Caco-2 (cell line): ENCODE measurements at regions of chr10 and their contacts with region 1.

Region 1: GRCh38 chr10:49518982-49519578 is 19.8 kb downstream of the ERCC6 start:
- DNase-seq: peak in 1 of 2 experiments; percentile 67
- H3K4me3 ChIP-seq: no peak overlapping the region
- H3K4me3 Mint-ChIP-seq: no peak overlapping the region
- H3K27ac Mint-ChIP-seq: no peak overlapping the region
- H3K4me1 ChIP-seq: no peaks in the 10 kb centered on the region
- H3K4me1 Mint-ChIP-seq: no peaks in the 10 kb centered on the region
- H3K27me3 ChIP-seq: no peaks in the 10 kb centered on the region
- H3K27me3 Mint-ChIP-seq: no peaks in the 10 kb centered on the region
- CTCF ChIP-seq: peak; percentile 79 to 81

Region 2: GRCh38 chr10:48885383-48885782 is 633.7 kb before region 1 on chr10:
- CTCF ChIA-PET with region 1: no interaction called
- POLR2A ChIA-PET with region 1: no interaction called
- intact Hi-C with region 1: loop called (anchors 10 kb)
- DNase-seq: peak in 1 of 2 experiments; percentile 61
- H3K4me3 ChIP-seq: no peak overlapping the region
- H3K4me3 Mint-ChIP-seq: no peak overlapping the region
- H3K27ac Mint-ChIP-seq: no peak overlapping the region
- H3K4me1 ChIP-seq: no peaks in the 10 kb centered on the region
- H3K4me1 Mint-ChIP-seq: no peaks in the 10 kb centered on the region
- H3K27me3 ChIP-seq: peaks cover 2% of the 10 kb centered on the region; the same call in 1 of the 2 replicates
- H3K27me3 Mint-ChIP-seq: peaks cover 20% of the 10 kb centered on the region
- CTCF ChIP-seq: peak; percentile 70 to 80

Region 3: DNA sequence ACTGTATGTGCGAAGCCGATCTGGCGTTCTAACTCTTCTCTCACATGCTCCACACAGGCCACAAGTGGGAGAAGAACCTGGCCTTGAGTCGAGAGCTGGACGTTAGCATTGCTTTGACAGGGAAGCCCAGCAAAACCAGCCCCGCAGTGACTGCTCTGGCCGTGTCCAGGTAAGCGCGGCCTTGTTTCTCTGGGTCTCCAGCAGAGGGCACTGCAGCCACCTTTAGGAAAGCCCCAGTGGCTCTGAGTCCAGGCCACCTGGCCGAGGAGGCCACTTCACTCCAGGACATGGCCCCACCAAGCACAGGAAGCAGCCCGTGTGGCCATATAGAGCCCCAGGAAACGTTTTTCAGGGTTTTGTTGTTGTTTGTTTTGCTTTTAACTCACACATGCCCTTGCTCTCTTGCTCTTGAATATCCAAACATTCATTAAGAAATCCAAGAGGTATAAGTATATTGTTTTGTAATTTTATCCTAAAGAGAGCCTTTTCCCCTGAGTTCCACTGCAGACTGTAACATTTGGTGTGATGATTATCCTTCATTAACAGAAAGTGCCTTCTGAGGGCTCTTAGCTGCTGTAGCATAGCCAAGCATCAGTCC is 537.7 kb before region 1 on chr10:
- CTCF ChIA-PET with region 1: no interaction called
- POLR2A ChIA-PET with region 1: no interaction called
- intact Hi-C with region 1: loop called (anchors 10 kb)
- DNase-seq: peak; percentile 75 to 80
- H3K4me3 ChIP-seq: no peak overlapping the region
- H3K4me3 Mint-ChIP-seq: no peak overlapping the region
- H3K27ac Mint-ChIP-seq: no peak overlapping the region
- H3K4me1 ChIP-seq: no peaks in the 10 kb centered on the region
- H3K4me1 Mint-ChIP-seq: no peaks in the 10 kb centered on the region
- H3K27me3 ChIP-seq: no peaks in the 10 kb centered on the region
- H3K27me3 Mint-ChIP-seq: peaks cover 18% of the 10 kb centered on the region
- CTCF ChIP-seq: peak; percentile 87 to 93

Region 4: DNA sequence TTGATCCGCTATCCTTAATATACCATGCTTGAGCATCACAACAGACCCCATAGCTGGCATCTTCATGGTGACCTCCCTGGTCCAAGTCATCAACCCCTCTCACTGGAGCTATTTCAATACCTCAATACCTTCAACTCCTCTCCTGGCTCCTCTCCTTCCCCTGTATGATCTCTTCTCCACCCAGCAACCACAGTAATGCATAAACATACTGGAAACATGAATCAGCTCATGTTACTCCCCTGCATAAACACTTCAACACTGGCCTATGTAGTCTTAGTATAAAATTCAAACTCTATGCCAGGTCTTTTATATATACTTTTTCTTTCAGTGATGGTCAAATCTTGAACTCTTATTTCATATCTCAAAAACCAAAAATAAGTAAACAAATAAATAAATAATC is 299.0 kb before region 1 on chr10:
- CTCF ChIA-PET with region 1: no interaction called
- POLR2A ChIA-PET with region 1: no interaction called
- intact Hi-C with region 1: loop called (anchors 10 kb)
- DNase-seq: no peak
- H3K4me3 ChIP-seq: no peak overlapping the region
- H3K4me3 Mint-ChIP-seq: no peak overlapping the region
- H3K27ac Mint-ChIP-seq: no peak overlapping the region
- H3K4me1 ChIP-seq: no peaks in the 10 kb centered on the region
- H3K4me1 Mint-ChIP-seq: no peaks in the 10 kb centered on the region
- H3K27me3 ChIP-seq: no peaks in the 10 kb centered on the region
- H3K27me3 Mint-ChIP-seq: peaks cover 18% of the 10 kb centered on the region
- CTCF ChIP-seq: no peak

Region 5: GRCh38 chr10:49407552-49408137 is 111.4 kb before region 1 on chr10:
- CTCF ChIA-PET with region 1: interaction called, 133 read pairs
- POLR2A ChIA-PET with region 1: no interaction called
- intact Hi-C with region 1: loop called (anchors 1 kb)
- DNase-seq: peak; percentile 84 to 91
- H3K4me3 ChIP-seq: no peak overlapping the region
- H3K4me3 Mint-ChIP-seq: no peak overlapping the region
- H3K27ac Mint-ChIP-seq: no peak overlapping the region
- H3K4me1 ChIP-seq: peaks cover 3% of the 10 kb centered on the region; the same call in 1 of the 2 replicates
- H3K4me1 Mint-ChIP-seq: peaks cover 6% of the 10 kb centered on the region
- H3K27me3 ChIP-seq: no peaks in the 10 kb centered on the region; the same call in 1 of the 2 replicates
- H3K27me3 Mint-ChIP-seq: peaks cover 14% of the 10 kb centered on the region
- CTCF ChIP-seq: peak; percentile 95 to 98

Region 6: GRCh38 chr10:49419005-49419404 is 100.1 kb before region 1 on chr10:
- CTCF ChIA-PET with region 1: interaction called, 4 read pairs
- POLR2A ChIA-PET with region 1: no interaction called
- intact Hi-C with region 1: loop called (anchors 1 kb)
- DNase-seq: peak; percentile 94 to 96
- H3K4me3 ChIP-seq: no peak overlapping the region
- H3K4me3 Mint-ChIP-seq: peak overlapping the region; percentile 57
- H3K27ac Mint-ChIP-seq: peak overlapping the region; percentile 93
- H3K4me1 ChIP-seq: peaks cover 12% of the 10 kb centered on the region
- H3K4me1 Mint-ChIP-seq: peaks cover 5% of the 10 kb centered on the region
- H3K27me3 ChIP-seq: no peaks in the 10 kb centered on the region
- H3K27me3 Mint-ChIP-seq: no peaks in the 10 kb centered on the region
- CTCF ChIP-seq: peak in 1 of 2 experiments; percentile 48

Region 7: GRCh38 chr10:49538381-49539319 is 19.6 kb after region 1 on chr10 and contains the start of gene ERCC6:
- CTCF ChIA-PET with region 1: interaction called, 11 read pairs
- POLR2A ChIA-PET with region 1: interaction called, 3 read pairs
- intact Hi-C with region 1: no loop called
- DNase-seq: peak; percentile 99
- H3K4me3 ChIP-seq: peak within 1 kb of the TSS; percentile 54
- H3K4me3 Mint-ChIP-seq: peak within 1 kb of the TSS; percentile 93
- H3K27ac Mint-ChIP-seq: peak within 1 kb of the TSS; percentile 96
- H3K4me1 ChIP-seq: no peaks in the 10 kb centered on the region
- H3K4me1 Mint-ChIP-seq: no peaks in the 10 kb centered on the region
- H3K27me3 ChIP-seq: no peaks in the 10 kb centered on the region
- H3K27me3 Mint-ChIP-seq: peaks cover 1% of the 10 kb centered on the region
- CTCF ChIP-seq: peak in 1 of 2 experiments; percentile 24
- total RNA-seq, gene ERCC6: 30.2 and 32.0 TPM in 2 replicates